Activated CD4-positive, alpha-beta memory T cell treated with anti-CD3 and anti-CD28 coated beads for 36 hours (primary cell): ENCODE measurements at regions of chr14 and their contacts with region 1.

Region 1: DNA sequence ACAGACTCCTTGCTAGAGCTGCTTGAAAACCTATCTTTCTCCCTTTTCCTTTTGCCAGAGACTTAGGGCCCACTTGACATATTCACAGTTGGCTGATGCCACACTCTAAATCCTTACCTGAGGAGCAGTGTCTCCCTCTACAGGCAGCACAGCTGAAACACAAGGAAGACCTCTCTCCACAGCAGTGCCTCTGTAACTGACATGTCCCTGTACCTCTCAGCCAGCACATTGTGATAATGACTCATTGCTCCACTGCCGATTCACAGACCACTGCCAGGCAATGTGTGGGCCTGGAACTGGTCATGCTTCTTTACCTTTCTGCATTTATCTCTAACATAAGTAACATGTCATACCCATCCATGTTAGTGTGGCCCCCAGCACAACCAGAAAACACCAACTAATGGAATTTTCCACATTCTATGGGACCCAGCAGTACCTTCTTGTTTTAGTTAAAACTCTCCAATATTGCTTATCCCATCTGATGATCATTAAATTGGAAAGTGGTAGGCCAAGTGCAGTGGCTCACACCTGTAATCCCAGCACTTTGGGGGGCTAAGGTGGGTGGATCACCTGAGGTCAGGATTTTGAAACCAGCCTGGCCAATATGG is 56.5 kb downstream of the GTF2A1 start:
- DNase-seq: peak; percentile 83
- H3K4me3 Mint-ChIP-seq: no peak overlapping the region
- H3K27ac Mint-ChIP-seq: no peak overlapping the region
- H3K4me1 Mint-ChIP-seq: peaks cover 10% of the 10 kb centered on the region
- H3K27me3 Mint-ChIP-seq: no peaks in the 10 kb centered on the region

Region 2: GRCh38 chr14:80213599-80213998 is 950.7 kb before region 1 on chr14:
- CTCF ChIA-PET with region 1: no interaction called
- POLR2A ChIA-PET with region 1: no interaction called
- intact Hi-C with region 1: loop called (anchors 5 kb)
- DNase-seq: no peak
- H3K4me3 Mint-ChIP-seq: no peak overlapping the region
- H3K27ac Mint-ChIP-seq: no peak overlapping the region
- H3K4me1 Mint-ChIP-seq: no peaks in the 10 kb centered on the region
- H3K27me3 Mint-ChIP-seq: no peaks in the 10 kb centered on the region

Region 3: GRCh38 chr14:80941241-80942182 is 222.8 kb before region 1 on chr14 and contains the start of gene CEP128:
- CTCF ChIA-PET with region 1: interaction called, 3 read pairs
- POLR2A ChIA-PET with region 1: no interaction called
- intact Hi-C with region 1: loop called (anchors 1 kb)
- DNase-seq: peak; percentile 92
- H3K4me3 Mint-ChIP-seq: peak within 1 kb of the TSS; percentile 88
- H3K27ac Mint-ChIP-seq: peak within 1 kb of the TSS; percentile 93
- H3K4me1 Mint-ChIP-seq: peaks cover 37% of the 10 kb centered on the region
- H3K27me3 Mint-ChIP-seq: no peaks in the 10 kb centered on the region
- total RNA-seq, gene CEP128: 19.4 to 22.8 TPM

Region 4: GRCh38 chr14:80996049-80996901 is 168.0 kb before region 1 on chr14:
- CTCF ChIA-PET with region 1: interaction called, 68 read pairs
- POLR2A ChIA-PET with region 1: interaction called, 3 read pairs
- intact Hi-C with region 1: loop called (anchors 1 kb)
- DNase-seq: peak; percentile 20
- H3K4me3 Mint-ChIP-seq: no peak overlapping the region
- H3K27ac Mint-ChIP-seq: no peak overlapping the region
- H3K4me1 Mint-ChIP-seq: peaks cover 7% of the 10 kb centered on the region
- H3K27me3 Mint-ChIP-seq: peaks cover 15% of the 10 kb centered on the region